ENCODE measurements at regions of chr10 and their contacts with region 1.

Region 1: GRCh38 chr10:26172131-26172530 is 44.4 kb upstream of the GAD2 start:
- DNase-seq: no peak
- H3K4me3 Mint-ChIP-seq: no peak overlapping the region
- H3K27ac Mint-ChIP-seq: no peak overlapping the region
- H3K4me1 Mint-ChIP-seq: no peaks in the 10 kb centered on the region
- H3K27me3 Mint-ChIP-seq: peaks cover 17% of the 10 kb centered on the region

Region 2: DNA sequence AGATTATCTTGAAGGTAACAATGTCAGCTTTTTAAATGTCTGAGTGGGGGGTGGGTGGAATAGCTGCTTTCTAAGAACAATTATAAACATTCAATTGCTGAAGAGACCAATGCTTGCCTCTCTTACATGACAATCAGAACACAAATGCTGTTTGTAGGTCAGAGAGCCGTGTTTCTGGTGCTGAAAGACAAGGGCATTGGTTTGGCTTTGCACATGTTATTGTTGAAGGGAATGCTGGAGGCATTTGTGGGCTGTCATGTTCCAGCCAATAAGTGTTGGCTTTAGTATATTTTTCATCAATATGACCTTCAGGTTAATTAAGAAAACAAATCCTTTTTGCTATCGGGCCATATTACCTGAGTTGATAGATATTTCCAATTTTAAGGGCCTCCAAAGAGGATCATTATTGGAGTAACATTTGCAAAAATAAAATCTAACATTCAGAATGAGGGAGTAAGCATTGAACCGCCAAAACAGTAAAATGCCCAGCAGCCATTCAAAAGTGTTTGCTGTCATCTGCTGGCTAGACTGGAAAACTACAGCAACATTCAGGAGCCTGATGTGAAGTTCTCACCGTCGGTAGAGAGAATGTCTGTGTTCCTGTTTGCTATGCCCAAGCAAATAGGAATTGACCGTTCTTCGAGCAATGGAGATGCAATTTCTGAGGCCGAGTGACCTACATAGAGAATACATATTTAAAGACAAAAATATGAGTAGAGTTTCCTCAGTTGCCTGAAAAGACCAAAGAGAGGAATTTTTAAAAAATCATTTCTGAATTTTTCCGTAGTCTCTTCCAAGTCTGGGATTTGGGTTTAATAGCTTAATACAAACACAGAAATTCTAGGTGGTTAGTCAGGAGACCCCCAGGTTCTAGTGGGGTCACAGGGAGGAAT is 384.9 kb after region 1 on chr10:
- CTCF ChIA-PET with region 1: no interaction called
- POLR2A ChIA-PET with region 1: interaction called, 15 read pairs
- DNase-seq: peak; percentile 53
- H3K4me3 Mint-ChIP-seq: no peak overlapping the region
- H3K27ac Mint-ChIP-seq: no peak overlapping the region
- H3K4me1 Mint-ChIP-seq: peaks cover 1% of the 10 kb centered on the region
- H3K27me3 Mint-ChIP-seq: no peaks in the 10 kb centered on the region